Heart left ventricle (tissue), 16 donors: ENCODE measurements at regions of chr9 and their contacts with region 1.

Region 1: GRCh38 chr9:98974994-98975712 is 31.4 kb downstream of the COL15A1 start:
- DNase-seq: peak; percentile 85 to 92 (median 86)
- ATAC-seq: peak; percentile 30 to 73 (median 71)
- H3K4me3 ChIP-seq: peak overlapping the region in 10 of 12 donors; percentile 14 to 46 (median 38)
- H3K27ac ChIP-seq: peak overlapping the region; percentile 53 to 91 (median 78)
- H3K4me1 ChIP-seq: peaks cover 6 to 97% (median 76%) of the 10 kb centered on the region in 12 donors
- H3K27me3 ChIP-seq: peaks cover 0 to 9% (median 0%) of the 10 kb centered on the region in 9 donors
- CTCF ChIP-seq: peak; percentile 94 to 100 (median 99)
- POLR2A ChIP-seq: peak in 1 of 2 donors; percentile 7

Region 2: DNA sequence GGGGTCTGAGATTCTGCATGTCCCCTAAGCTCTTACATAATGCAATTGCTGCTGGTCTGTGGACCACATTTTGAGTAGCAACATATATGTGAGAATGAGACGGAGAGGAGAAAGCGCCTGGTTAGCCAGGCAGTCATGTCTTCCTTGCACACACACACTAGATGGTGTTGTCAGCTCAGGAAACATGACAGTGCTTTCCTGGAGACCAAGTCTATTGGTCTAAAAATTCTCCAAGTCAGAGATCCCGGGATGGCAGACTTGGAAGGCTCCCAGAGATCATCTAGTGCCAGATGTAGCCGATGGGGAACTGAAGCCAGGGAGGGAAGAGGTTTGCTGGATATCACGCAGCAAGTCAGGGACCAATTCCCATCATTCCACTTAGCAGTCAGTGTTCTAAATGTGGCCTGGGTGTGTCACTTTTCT is 114.3 kb before region 1 on chr9:
- intact Hi-C with region 1: loop called in 8 of 10 experiments (anchors 2 to 10 kb)
- DNase-seq: peak in 4 of 5 donors; percentile 82 to 90 (median 84)
- ATAC-seq: peak; percentile 78 to 94 (median 90)
- H3K4me3 ChIP-seq: no peak overlapping the region
- H3K27ac ChIP-seq: peak overlapping the region in 10 of 12 donors; percentile 23 to 85 (median 50)
- H3K4me1 ChIP-seq: peaks cover 4 to 64% (median 36%) of the 10 kb centered on the region in 12 donors
- H3K27me3 ChIP-seq: no peaks in the 10 kb centered on the region
- CTCF ChIP-seq: peak; percentile 39 to 90 (median 71)
- POLR2A ChIP-seq: no peak

Region 3: DNA sequence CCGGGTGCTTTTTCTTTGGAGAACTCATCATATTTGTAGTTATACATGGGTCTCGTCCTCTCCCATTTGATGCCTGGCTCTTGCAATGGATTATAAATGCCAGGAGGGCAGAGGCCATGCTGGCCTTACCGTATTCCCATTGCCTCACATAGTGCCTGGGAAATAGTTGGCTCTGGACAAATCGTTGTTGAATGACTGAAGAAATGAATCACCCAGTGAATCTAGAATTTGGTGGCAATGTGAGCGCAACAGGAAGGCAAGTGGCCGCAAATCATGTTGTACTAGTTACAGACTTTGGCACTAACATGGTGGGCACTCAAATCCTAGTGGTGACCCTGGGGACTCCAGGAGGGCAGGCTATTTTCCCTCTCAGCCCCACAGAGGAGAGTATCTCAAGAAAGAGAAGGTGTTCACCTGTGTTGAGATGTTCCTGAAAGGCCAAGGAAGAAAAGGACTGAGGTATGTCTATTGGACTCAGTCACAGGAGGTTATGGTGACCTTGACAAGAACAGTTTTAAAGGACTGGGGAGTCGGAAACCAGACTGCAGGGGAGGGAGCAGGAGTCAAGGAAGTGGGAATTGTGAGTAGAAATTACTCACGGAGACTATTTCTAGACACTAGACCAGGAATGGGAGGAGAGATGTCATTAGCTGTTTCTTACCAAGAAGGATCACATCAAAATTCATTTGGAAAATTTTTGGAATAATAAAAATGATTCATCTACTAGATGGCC is 93.2 kb before region 1 on chr9:
- intact Hi-C with region 1: loop called in 2 of 10 experiments (anchors 5 kb)
- DNase-seq: peak in 1 of 5 donors; percentile 40
- ATAC-seq: peak in 3 of 4 donors; percentile 23 to 74 (median 55)
- H3K4me3 ChIP-seq: no peak overlapping the region
- H3K27ac ChIP-seq: peak overlapping the region in 10 of 12 donors; percentile 17 to 80 (median 50)
- H3K4me1 ChIP-seq: peaks cover 0 to 74% (median 52%) of the 10 kb centered on the region in 12 donors
- H3K27me3 ChIP-seq: no peaks in the 10 kb centered on the region
- CTCF ChIP-seq: no peak
- POLR2A ChIP-seq: no peak

Region 4: GRCh38 chr9:98906262-98907040 is 68.7 kb before region 1 on chr9:
- intact Hi-C with region 1: loop called in 1 of 10 experiments (anchors 5 kb)
- DNase-seq: peak; percentile 43 to 86 (median 77)
- ATAC-seq: peak in 2 of 4 donors; percentile 18 to 52
- H3K4me3 ChIP-seq: no peak overlapping the region
- H3K27ac ChIP-seq: peak overlapping the region in 11 of 12 donors; percentile 3 to 86 (median 52)
- H3K4me1 ChIP-seq: peaks cover 3 to 56% (median 34%) of the 10 kb centered on the region in 12 donors
- H3K27me3 ChIP-seq: no peaks in the 10 kb centered on the region
- CTCF ChIP-seq: no peak
- POLR2A ChIP-seq: no peak

Region 5: GRCh38 chr9:98916660-98917059 is 58.5 kb before region 1 on chr9:
- intact Hi-C with region 1: no loop called
- DNase-seq: peak; percentile 64 to 87 (median 85)
- ATAC-seq: peak; percentile 71 to 88 (median 77)
- H3K4me3 ChIP-seq: no peak overlapping the region
- H3K27ac ChIP-seq: peak overlapping the region in 11 of 12 donors; percentile 35 to 87 (median 68)
- H3K4me1 ChIP-seq: peaks cover 0 to 32% (median 20%) of the 10 kb centered on the region in 12 donors
- H3K27me3 ChIP-seq: no peaks in the 10 kb centered on the region
- CTCF ChIP-seq: no peak
- POLR2A ChIP-seq: no peak

Region 6: GRCh38 chr9:99140685-99141314 is 165.6 kb after region 1 on chr9:
- intact Hi-C with region 1: loop called in 1 of 10 experiments (anchors 1 kb)
- DNase-seq: peak in 4 of 5 donors; percentile 31 to 49 (median 36)
- ATAC-seq: peak in 3 of 4 donors; percentile 85 to 90 (median 89)
- H3K4me3 ChIP-seq: no peak overlapping the region
- H3K27ac ChIP-seq: peak overlapping the region in 3 of 12 donors; percentile 10 to 48 (median 23)
- H3K4me1 ChIP-seq: peaks cover 0 to 47% (median 6%) of the 10 kb centered on the region in 12 donors
- H3K27me3 ChIP-seq: no peaks in the 10 kb centered on the region
- CTCF ChIP-seq: peak; percentile 75 to 95 (median 88)
- POLR2A ChIP-seq: no peak